ENCODE measurements at regions of chr12 and their contacts with region 1.

Region 1: GRCh38 chr12:122860346-122861090 is 25.3 kb downstream of the HIP1R start:
- DNase-seq: peak; percentile 39 to 95
- H3K4me3 ChIP-seq: no peak overlapping the region
- H3K27ac ChIP-seq: no peak overlapping the region
- H3K4me1 ChIP-seq: 0 out of 7 replicates have a peak, but pooled peaks cover 0 to 2% (median 0%) of the 10 kb centered on the region in 4 experiments
- H3K27me3 ChIP-seq: peaks cover 0 to 2% (median 0%) of the 10 kb centered on the region in 4 experiments; a peak in 1 of 7 replicates
- CTCF ChIP-seq: peak in 2 of 3 experiments; percentile 92 to 95; a peak in 3 of 4 replicates
- EP300 ChIP-seq: peak in 1 of 2 experiments; percentile 57; a peak in 1 of 3 replicates
- POLR2A ChIP-seq: no peak
- RAD21 ChIP-seq: peak; percentile 93 to 96

Region 2: DNA sequence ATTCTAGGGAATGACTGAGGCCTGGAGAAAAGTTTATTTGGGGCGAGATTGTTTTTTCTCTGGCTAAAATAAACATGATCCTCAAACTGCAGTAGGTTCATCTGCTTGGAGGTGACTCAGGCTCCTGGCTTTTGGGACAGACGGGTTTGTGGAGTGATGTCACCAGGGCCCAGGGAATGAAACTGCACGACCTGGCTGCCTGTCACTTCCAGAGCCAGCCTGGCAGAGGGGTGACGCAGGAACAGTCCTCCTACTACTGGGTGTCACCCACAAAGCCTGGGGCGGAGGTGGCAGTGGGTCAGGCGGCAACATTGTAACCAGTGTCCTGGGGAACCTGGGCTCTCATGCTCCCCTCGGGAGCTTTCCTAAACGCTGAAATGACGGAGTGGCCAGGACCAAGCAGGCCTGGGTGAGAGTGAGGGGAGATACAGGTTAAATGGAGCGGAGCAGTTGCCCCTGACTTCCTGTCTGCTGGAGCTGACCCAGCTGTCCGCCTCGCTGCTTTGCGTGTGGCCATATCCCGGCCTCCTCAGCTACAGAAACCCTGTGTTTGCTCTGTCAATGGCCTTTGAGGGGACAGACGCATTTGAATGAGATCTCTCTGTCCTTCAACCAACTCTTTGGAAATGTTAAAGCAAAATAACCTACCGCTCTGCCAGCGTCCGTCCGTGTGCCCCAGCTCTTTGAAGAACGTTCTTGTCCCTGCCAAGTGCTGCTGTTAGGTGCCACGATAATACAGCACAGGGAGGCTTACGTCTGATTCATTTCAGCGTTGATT is 18.8 kb before region 1 on chr12:
- CTCF ChIA-PET with region 1: interaction called, 129 read pairs
- POLR2A ChIA-PET with region 1: interaction called, 7 read pairs
- DNase-seq: no peak
- H3K4me3 ChIP-seq: no peak overlapping the region
- H3K27ac ChIP-seq: no peak overlapping the region
- H3K4me1 ChIP-seq: peaks cover 3 to 19% (median 10%) of the 10 kb centered on the region in 4 experiments
- H3K27me3 ChIP-seq: peaks cover 0 to 17% (median 11%) of the 10 kb centered on the region in 4 experiments; a peak in 6 of 7 replicates
- CTCF ChIP-seq: no peak
- EP300 ChIP-seq: no peak
- POLR2A ChIP-seq: no peak
- RAD21 ChIP-seq: no peak

Region 3: GRCh38 chr12:122880668-122881067 is 20.1 kb after region 1 on chr12:
- CTCF ChIA-PET with region 1: interaction called, 36 read pairs
- POLR2A ChIA-PET with region 1: no interaction called
- DNase-seq: no peak
- H3K4me3 ChIP-seq: no peak overlapping the region
- H3K27ac ChIP-seq: no peak overlapping the region
- H3K4me1 ChIP-seq: peaks cover 0 to 2% (median 0%) of the 10 kb centered on the region in 4 experiments; a peak in 1 of 7 replicates
- H3K27me3 ChIP-seq: peaks cover 2 to 38% (median 35%) of the 10 kb centered on the region in 4 experiments
- CTCF ChIP-seq: peak; percentile 37 to 59 (median 59)
- EP300 ChIP-seq: no peak
- POLR2A ChIP-seq: no peak
- RAD21 ChIP-seq: peak; percentile 47 to 59

Region 4: GRCh38 chr12:122951979-122952892 is 91.7 kb after region 1 on chr12:
- CTCF ChIA-PET with region 1: interaction called, 473 read pairs
- POLR2A ChIA-PET with region 1: interaction called, 4 read pairs
- DNase-seq: peak in 1 of 2 experiments; percentile 73
- H3K4me3 ChIP-seq: no peak overlapping the region
- H3K27ac ChIP-seq: no peak overlapping the region
- H3K4me1 ChIP-seq: no peaks in the 10 kb centered on the region
- H3K27me3 ChIP-seq: no peaks in the 10 kb centered on the region
- CTCF ChIP-seq: peak; percentile 94 to 97 (median 95)
- EP300 ChIP-seq: no peak
- POLR2A ChIP-seq: no peak
- RAD21 ChIP-seq: peak; percentile 96 to 98

Region 5: DNA sequence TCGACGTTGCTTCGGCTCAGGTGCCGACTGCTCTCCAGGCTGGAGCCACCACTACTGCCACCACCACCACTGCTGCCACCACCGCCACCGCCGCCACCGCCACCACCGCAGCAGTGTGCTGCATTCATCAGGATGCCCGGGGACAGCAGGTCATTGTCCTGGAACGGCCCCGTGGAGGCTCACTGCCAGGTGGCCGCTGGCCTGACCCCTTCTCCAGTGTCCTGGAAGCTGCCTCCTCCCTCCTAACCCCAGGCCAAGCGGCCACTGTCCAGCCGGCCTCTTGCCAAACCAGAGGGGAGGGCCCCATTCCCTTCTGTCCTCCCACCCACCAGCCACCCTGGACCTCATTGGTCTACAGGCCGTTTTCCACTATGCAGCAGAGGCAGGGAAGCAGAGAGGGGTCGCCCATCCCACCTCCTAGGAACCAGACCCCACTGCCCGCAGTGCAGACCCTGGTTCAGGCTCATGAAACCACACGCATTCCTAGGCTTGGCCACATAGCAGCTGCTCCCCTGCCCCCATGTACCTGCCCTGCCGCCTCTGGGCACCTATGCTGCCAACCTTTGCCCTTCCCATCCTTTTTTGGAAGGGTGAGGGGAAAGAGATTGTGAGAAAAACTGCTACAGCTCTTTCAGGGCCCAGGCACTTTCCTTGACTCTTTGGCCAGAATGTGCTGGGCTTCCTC is 135.1 kb after region 1 on chr12:
- CTCF ChIA-PET with region 1: interaction called, 13 read pairs
- POLR2A ChIA-PET with region 1: no interaction called
- DNase-seq: no peak
- H3K4me3 ChIP-seq: no peak overlapping the region
- H3K27ac ChIP-seq: no peak overlapping the region
- H3K4me1 ChIP-seq: no peaks in the 10 kb centered on the region; a peak in 2 of 7 replicates
- H3K27me3 ChIP-seq: no peaks in the 10 kb centered on the region
- CTCF ChIP-seq: no peak
- EP300 ChIP-seq: no peak
- POLR2A ChIP-seq: no peak
- RAD21 ChIP-seq: no peak